ENCODE measurements at regions of chr13 and their contacts with region 1.

Region 1: DNA sequence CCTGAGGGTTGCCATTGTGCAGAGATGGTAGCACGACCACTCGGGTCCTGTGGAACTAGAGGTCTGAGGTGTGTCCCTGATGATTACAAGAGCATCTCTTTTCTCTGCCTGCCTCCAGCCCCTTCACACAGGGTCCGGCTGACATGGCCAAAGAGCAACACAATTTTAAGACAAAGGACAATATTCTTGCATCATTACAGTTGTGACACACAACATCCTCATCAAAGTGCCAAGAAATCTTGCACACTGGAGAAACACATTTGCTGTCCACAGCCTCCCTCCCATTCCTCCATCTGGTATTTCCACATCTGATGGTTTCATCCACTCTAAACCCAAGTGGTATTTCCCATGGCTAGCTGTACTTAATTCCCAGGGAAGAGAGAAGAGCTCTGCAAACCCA is 12.8 kb downstream of the COL4A1 start:
- DNase-seq: no peak
- H3K4me3 ChIP-seq: no peak overlapping the region
- H3K27ac ChIP-seq: no peak overlapping the region
- H3K4me1 ChIP-seq: no peaks in the 10 kb centered on the region
- H3K27me3 ChIP-seq: no peaks in the 10 kb centered on the region
- CTCF ChIP-seq: no peak

Region 2: GRCh38 chr13:110244071-110244830 is 49.9 kb before region 1 on chr13:
- CTCF ChIA-PET with region 1: no interaction called
- dilution Hi-C with region 1: loop called (anchors 5 kb)
- in situ Hi-C with region 1: no loop called
- intact Hi-C with region 1: no loop called
- DNase-seq: no peak
- H3K4me3 ChIP-seq: no peak overlapping the region
- H3K27ac ChIP-seq: no peak overlapping the region
- H3K4me1 ChIP-seq: no peaks in the 10 kb centered on the region
- H3K27me3 ChIP-seq: no peaks in the 10 kb centered on the region
- CTCF ChIP-seq: no peak